Left ventricle myocardium superior (tissue), 1 donor: ENCODE measurements at regions of chr9 and their contacts with region 1.

Region 1: DNA sequence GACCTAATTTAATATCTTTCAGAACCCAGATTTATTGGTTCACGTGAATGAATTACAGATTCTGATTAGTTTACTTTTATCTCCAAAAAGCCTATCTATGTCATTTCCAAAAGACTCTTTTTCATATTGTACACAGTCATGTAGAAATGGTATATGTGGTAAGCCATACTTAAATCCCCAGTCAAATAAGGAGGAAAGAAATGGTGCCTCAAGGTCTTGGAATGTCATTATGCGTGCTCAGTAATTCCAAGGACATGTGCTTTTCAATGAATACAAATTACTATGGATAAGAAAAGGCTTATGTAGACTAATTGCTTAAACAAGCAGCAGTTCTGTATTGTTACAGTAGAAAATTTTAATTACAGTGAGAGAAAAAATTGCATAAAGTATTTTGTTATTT is 64.1 kb upstream of the TYRP1 start:
- DNase-seq: no peak
- ATAC-seq: no peak

Region 2: DNA sequence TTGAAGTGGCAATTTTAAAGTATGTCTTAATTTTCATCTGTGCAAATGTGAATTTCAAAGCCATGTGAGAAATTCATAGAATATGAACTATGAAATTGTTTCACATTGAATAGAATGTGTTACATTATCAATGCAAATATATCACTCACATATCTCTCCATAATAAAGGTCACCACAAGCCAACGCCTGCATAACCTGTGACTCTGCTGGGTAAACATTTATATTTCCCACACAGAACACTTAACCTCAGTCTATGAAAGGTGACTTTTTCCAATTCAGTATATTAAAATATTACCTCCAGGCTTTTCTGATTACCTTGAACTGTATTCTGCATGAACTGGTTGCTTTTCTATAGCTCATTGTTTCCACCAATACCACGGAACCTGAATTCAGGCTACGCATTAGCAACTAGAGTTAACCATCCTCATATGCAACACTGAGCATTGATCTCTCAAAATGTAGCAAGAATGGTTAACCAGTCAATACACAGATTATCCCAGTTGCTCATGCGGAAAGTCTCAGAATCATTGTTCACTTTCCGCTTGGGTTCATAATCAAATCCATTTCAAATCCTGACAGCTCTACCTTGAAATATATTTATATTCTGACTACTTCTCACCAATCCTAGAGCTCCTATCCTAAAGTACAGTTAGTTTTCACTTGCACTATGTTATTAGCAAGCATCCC is 62.5 kb before region 1 on chr9:
- intact Hi-C with region 1: loop called (anchors 10 kb)
- DNase-seq: no peak
- ATAC-seq: no peak